CD8-positive, alpha-beta T cell (primary cell): ENCODE measurements at regions of chr7 and their contacts with region 1.

Region 1: GRCh38 chr7:64562626-64563275 is at the start of gene ZNF680:
- DNase-seq: peak; percentile 78 to 92 (median 89)
- ATAC-seq: peak; percentile 98
- H3K4me3 ChIP-seq: peak within 1 kb of the TSS; percentile 84 to 96
- H3K4me3 Mint-ChIP-seq: peak within 1 kb of the TSS; percentile 99
- H3K27ac ChIP-seq: peak within 1 kb of the TSS; percentile 69 to 71
- H3K27ac Mint-ChIP-seq: peak within 1 kb of the TSS; percentile 97
- H3K4me1 ChIP-seq: peaks cover 10% of the 10 kb centered on the region
- H3K4me1 Mint-ChIP-seq: peaks cover 33% of the 10 kb centered on the region
- H3K27me3 ChIP-seq: no peaks in the 10 kb centered on the region
- H3K27me3 Mint-ChIP-seq: no peaks in the 10 kb centered on the region
- CTCF ChIP-seq: no peak
- total RNA-seq, gene ZNF680: 6.8 to 8.4 TPM

Region 2: GRCh38 chr7:63925623-63926460 is 636.9 kb before region 1 on chr7:
- CTCF ChIA-PET with region 1: no interaction called
- POLR2A ChIA-PET with region 1: no interaction called
- intact Hi-C with region 1: loop called in 1 of 2 experiments (anchors 10 kb)
- DNase-seq: peak; percentile 80 to 95 (median 90)
- ATAC-seq: peak; percentile 95
- H3K4me3 ChIP-seq: peak overlapping the region; percentile 76 to 93
- H3K4me3 Mint-ChIP-seq: peak overlapping the region; percentile 94
- H3K27ac ChIP-seq: peak overlapping the region; percentile 84 to 88
- H3K27ac Mint-ChIP-seq: peak overlapping the region; percentile 92
- H3K4me1 ChIP-seq: no peaks in the 10 kb centered on the region
- H3K4me1 Mint-ChIP-seq: peaks cover 13% of the 10 kb centered on the region
- H3K27me3 ChIP-seq: no peaks in the 10 kb centered on the region
- H3K27me3 Mint-ChIP-seq: no peaks in the 10 kb centered on the region
- CTCF ChIP-seq: no peak

Region 3: DNA sequence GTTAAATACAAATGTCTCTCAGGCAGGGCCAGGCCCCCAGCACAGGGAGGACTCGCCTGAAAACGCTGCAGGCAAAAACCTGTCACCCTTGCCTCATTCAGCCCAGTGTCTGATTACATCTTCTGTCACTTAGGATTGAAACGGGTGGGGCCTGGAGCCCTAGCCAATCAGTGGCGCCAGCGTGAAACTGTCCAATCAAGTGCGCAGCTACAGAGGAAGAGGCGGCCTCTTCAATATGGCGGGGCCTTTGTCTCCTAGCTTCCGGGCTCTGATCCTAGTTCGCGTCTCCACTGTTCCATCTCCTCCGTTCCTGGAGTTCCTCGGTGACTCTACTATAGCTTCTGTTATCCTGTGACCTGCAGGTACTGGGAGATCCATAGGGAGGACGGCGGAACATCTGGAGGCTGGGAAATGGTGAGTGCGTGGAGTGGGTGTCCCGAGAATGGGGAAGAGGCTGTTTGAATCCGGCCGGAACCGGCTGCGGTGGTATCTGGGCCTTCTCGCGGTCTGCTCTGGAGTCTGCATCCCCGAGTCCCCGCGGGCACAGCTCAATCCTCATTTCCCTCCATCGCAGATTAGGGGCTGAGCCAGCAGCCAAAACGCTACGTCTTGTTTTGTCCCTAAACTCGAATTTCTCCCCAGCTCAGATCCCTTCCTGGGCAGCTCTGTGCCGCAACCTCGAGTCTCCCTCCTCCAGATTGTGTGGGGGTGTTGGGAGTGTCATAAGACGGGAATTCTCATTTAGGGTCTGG is 248.8 kb before region 1 on chr7 and contains the start of gene ZNF736:
- CTCF ChIA-PET with region 1: no interaction called
- POLR2A ChIA-PET with region 1: interaction called, 8 read pairs
- intact Hi-C with region 1: loop called (anchors 2 kb)
- DNase-seq: peak; percentile 71 to 94 (median 86)
- ATAC-seq: peak; percentile 100
- H3K4me3 ChIP-seq: peak within 1 kb of the TSS; percentile 66 to 98
- H3K4me3 Mint-ChIP-seq: peak within 1 kb of the TSS; percentile 99
- H3K27ac ChIP-seq: peak within 1 kb of the TSS; percentile 76 to 88
- H3K27ac Mint-ChIP-seq: peak within 1 kb of the TSS; percentile 98
- H3K4me1 ChIP-seq: peaks cover 25% of the 10 kb centered on the region
- H3K4me1 Mint-ChIP-seq: peaks cover 32% of the 10 kb centered on the region
- H3K27me3 ChIP-seq: no peaks in the 10 kb centered on the region
- H3K27me3 Mint-ChIP-seq: no peaks in the 10 kb centered on the region
- CTCF ChIP-seq: no peak
- total RNA-seq, gene ZNF736: 23.4 to 26.6 TPM

Region 4: DNA sequence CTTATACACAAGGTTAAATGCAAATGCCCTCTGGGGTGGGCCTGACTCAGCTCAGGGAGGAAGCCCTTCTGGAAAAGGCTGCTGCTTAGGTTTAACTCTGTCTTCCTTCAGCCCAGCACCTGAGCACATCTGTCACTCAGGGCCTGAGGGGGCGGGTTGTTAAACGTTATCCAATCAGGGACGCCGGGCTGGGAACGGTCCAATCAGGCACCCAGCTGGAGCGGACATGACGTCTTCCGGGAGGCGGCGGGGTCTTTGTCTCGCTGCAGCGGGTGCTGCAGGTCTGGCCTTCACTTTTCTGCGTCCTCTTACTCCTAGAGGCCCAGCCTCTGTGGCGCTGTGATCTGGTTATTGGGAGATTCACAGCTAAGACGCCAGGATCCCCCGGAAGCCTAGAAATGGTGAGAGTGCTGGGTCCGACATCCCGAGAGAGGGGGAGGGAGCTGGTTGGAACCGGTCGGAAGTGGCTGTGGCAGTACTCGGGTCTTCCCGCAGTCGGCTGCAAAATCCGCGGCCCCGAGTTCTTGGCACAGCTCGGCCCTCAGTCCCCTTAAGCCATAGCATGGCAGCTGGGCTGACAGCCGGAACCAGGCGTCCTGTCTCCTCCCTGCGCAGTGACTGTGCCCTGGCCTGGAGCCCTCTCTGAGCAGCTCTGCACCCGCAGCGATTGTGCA is 231.6 kb after region 1 on chr7 and contains the start of gene ZNF138:
- CTCF ChIA-PET with region 1: no interaction called
- POLR2A ChIA-PET with region 1: interaction called, 11 read pairs
- intact Hi-C with region 1: loop called (anchors 1 to 2 kb)
- DNase-seq: peak; percentile 88 to 96 (median 94)
- ATAC-seq: peak; percentile 98
- H3K4me3 ChIP-seq: peak within 1 kb of the TSS; percentile 75 to 79
- H3K4me3 Mint-ChIP-seq: peak within 1 kb of the TSS; percentile 99
- H3K27ac ChIP-seq: peak within 1 kb of the TSS; percentile 87 to 90
- H3K27ac Mint-ChIP-seq: peak within 1 kb of the TSS; percentile 98
- H3K4me1 ChIP-seq: peaks cover 21% of the 10 kb centered on the region
- H3K4me1 Mint-ChIP-seq: peaks cover 35% of the 10 kb centered on the region
- H3K27me3 ChIP-seq: no peaks in the 10 kb centered on the region
- H3K27me3 Mint-ChIP-seq: no peaks in the 10 kb centered on the region
- CTCF ChIP-seq: no peak
- total RNA-seq, gene ZNF138: 4.9 to 5.3 TPM

Region 5: GRCh38 chr7:65037740-65038678 is 475.3 kb after region 1 on chr7:
- CTCF ChIA-PET with region 1: no interaction called
- POLR2A ChIA-PET with region 1: no interaction called
- intact Hi-C with region 1: loop called in 1 of 2 experiments (anchors 10 kb)
- DNase-seq: peak; percentile 87 to 97 (median 94)
- ATAC-seq: peak; percentile 89
- H3K4me3 ChIP-seq: peak overlapping the region; percentile 52 to 69
- H3K4me3 Mint-ChIP-seq: peak overlapping the region; percentile 79
- H3K27ac ChIP-seq: peak overlapping the region; percentile 62 to 74
- H3K27ac Mint-ChIP-seq: peak overlapping the region; percentile 80
- H3K4me1 ChIP-seq: peaks cover 11% of the 10 kb centered on the region
- H3K4me1 Mint-ChIP-seq: peaks cover 14% of the 10 kb centered on the region
- H3K27me3 ChIP-seq: no peaks in the 10 kb centered on the region
- H3K27me3 Mint-ChIP-seq: no peaks in the 10 kb centered on the region
- CTCF ChIP-seq: peak; percentile 16